ENCODE measurements at regions of chr14 and their contacts with region 1.

Region 1: DNA sequence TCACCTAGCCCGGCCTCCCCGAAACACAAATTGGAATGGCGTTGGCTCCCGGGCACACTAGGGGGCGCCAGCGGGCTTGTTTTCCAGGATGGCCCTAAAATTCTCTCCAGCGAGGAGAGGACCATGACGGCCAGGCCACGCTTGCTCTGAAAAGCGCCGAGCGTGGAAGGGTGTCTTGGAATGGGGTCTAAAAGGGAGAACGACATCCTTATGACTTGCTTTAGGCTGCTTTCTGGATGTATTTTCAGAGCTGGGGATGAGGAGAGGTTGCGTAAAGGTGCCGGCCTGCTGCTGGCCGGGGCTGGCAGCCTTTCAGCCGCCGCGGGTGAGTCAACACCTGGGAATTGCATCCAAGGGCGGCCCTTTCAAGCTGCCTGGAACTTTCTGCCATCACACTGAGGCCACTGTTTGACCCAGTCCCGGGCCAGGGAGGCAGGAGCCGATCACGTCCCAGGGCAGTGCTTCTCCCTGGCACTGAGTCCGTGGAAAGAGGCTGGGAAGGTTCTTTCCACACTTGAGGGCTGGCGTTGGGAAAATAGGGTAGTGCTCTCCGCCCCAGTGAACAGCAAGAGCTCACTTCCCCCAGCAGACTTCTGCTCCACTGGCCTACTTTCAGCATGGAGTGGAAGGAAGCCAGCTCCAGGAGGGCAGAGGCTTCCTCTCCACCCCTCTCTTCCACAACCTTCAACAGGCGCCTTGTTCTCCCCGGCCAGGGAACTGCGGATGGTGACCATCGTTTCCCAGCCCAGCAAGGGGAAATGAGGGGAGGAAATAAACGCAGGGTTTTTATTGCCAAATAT is 216.2 kb downstream of the TTC8 start:
- DNase-seq: peak; percentile 87
- H3K4me3 Mint-ChIP-seq: peak overlapping the region; percentile 62
- H3K27ac Mint-ChIP-seq: no peak overlapping the region
- H3K4me1 Mint-ChIP-seq: peaks cover 4% of the 10 kb centered on the region
- H3K27me3 Mint-ChIP-seq: peaks cover 15% of the 10 kb centered on the region

Region 2: DNA sequence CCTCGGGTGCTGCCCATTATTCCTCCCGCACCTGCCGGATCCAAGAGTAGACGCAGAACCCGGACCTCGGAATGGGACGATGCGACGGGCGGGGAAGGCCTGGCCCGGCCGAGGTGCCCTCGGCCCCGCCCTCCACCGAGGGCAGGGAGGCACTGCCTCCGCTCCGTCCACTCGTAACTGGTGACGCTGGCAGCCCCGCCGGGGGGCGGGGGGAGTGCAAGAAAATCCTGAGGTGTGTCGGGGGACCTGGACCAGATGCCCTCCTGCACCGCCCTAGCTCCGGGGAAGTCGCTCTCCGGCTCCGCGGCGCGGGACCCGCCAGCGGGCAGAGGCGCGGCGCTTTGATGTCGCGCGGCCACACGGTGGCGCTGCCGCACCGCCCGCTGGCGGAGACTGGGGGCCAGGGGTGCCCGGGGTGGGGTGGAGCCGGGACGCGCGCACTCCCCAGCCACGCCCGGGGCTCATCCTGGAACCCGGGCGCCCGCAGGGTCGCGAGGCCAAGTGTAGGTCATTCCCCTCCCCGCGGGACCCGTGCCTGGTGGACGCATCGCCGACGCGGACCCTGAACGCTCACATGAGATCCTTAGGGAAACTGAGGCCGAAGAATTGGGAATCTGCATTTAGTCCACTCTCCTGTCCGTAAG is 13.4 kb before region 1 on chr14:
- CTCF ChIA-PET with region 1: interaction called, 25 read pairs
- POLR2A ChIA-PET with region 1: no interaction called
- intact Hi-C with region 1: no loop called
- DNase-seq: peak; percentile 60
- H3K4me3 Mint-ChIP-seq: peak overlapping the region; percentile 50
- H3K27ac Mint-ChIP-seq: no peak overlapping the region
- H3K4me1 Mint-ChIP-seq: peaks cover 2% of the 10 kb centered on the region
- H3K27me3 Mint-ChIP-seq: peaks cover 63% of the 10 kb centered on the region

Region 3: DNA sequence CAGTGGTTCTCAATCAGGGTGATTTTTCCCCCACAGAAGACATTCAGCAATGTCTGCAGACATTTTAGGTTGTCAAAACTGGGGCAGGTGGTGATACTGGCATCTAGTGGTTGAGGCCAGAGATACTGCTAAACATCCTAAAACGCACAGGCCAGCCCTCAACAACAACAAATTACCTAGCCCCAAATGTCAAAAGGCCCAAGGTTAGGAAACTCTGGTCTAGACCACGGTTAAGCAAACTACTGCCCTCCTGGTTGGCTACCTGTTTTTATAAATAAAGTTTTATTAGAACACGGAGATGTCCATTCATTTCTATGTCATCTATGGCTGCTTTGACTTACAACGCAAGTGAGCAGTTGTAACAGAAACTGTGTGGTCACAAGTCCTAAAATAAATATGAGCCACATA is 727.2 kb after region 1 on chr14:
- CTCF ChIA-PET with region 1: interaction called, 3 read pairs
- POLR2A ChIA-PET with region 1: no interaction called
- intact Hi-C with region 1: loop called (anchors 2 kb)
- DNase-seq: peak; percentile 75
- H3K4me3 Mint-ChIP-seq: no peak overlapping the region
- H3K27ac Mint-ChIP-seq: peak overlapping the region; percentile 39
- H3K4me1 Mint-ChIP-seq: peaks cover 18% of the 10 kb centered on the region
- H3K27me3 Mint-ChIP-seq: peaks cover 2% of the 10 kb centered on the region

Region 4: GRCh38 chr14:89899917-89900663 is 859.4 kb after region 1 on chr14:
- CTCF ChIA-PET with region 1: interaction called, 3 read pairs
- POLR2A ChIA-PET with region 1: no interaction called
- intact Hi-C with region 1: loop called (anchors 1 kb)
- DNase-seq: no peak
- H3K4me3 Mint-ChIP-seq: no peak overlapping the region
- H3K27ac Mint-ChIP-seq: no peak overlapping the region
- H3K4me1 Mint-ChIP-seq: peaks cover 14% of the 10 kb centered on the region
- H3K27me3 Mint-ChIP-seq: peaks cover 2% of the 10 kb centered on the region

Region 5: DNA sequence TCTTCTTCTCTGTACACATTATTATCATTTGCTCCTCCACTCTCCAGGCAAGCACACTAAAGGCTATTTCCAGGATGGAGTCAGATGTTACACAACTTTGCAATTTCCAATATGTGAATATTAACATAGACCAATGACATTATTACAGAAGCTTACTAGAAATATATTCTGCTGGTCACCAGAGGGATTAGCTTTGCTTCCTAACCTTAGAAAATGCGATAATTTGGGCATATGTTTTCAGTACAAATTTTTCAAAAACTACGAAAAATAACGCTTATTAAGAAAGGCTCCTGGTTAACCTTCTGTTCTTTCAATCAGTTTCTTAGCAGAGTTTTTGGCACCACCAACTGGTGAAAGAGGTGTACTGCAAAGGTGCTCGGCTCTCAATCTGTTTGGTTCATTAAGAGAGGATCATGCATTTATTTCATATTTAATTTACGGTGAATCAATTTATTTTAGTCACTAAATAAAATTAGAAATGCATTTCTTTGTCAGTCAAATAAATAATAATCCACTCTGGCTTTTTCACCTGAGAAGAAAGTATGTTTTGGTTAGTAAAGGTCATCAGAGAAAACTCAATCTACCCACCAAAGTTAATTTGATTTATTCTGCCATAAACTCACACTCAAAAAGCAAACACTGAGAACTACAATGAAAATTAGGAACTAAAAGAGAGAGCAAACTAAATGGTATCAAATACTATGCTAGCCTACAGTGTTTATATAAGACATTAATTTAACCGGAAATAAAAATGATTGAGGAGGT is 874.6 kb after region 1 on chr14:
- CTCF ChIA-PET with region 1: interaction called, 18 read pairs
- POLR2A ChIA-PET with region 1: no interaction called
- intact Hi-C with region 1: loop called (anchors 1 kb)
- DNase-seq: peak; percentile 69
- H3K4me3 Mint-ChIP-seq: no peak overlapping the region
- H3K27ac Mint-ChIP-seq: no peak overlapping the region
- H3K4me1 Mint-ChIP-seq: peaks cover 3% of the 10 kb centered on the region
- H3K27me3 Mint-ChIP-seq: peaks cover 2% of the 10 kb centered on the region

Measured in activated CD4-positive, alpha-beta memory T cell treated with anti-CD3 and anti-CD28 coated beads for 36 hours (primary cell).